Thyroid gland (tissue), 4 donors: ENCODE measurements at regions of chr7 and their contacts with region 1.

Region 1: DNA sequence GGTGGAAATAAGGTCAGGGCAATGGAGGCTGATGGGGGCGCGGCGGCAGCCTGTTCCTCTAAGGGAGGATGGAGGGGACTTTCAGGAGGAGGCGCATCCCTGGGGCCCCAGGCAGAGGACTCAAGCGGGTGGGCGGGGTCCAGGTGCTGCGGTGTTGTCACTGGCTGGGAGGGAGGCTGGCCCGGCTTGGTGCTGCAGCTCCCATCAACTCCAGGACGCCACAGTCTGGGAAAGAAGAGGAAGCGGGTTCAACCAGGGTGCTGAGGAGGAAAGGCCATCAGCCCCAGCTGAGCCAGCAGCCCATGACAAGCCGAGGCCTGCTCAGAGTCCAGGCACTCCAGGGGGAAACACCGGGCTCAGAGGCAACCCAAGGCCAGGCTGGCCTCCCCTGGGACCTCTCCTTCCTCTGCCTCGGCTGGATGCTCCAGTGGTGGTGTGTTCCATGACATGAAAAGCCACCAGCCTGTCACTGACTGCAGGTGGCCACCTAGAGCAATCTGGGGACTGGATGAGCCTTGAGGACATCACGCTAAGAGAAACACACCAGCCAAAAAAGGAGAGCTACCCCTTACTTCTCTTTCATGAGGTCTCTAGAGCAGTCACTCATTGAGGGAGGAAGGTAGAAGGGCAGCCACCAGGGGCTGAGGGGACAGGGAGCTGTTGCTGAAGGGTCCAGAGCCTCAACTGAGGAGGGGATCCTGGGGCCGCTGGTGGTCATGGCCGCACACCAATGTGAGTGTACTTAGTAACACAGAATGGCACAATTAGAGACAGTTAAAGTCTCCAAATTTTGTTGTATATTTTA is 4.5 kb downstream of the GIGYF1 start:
- DNase-seq: no peak
- H3K4me3 ChIP-seq: no peak overlapping the region
- H3K27ac ChIP-seq: no peak overlapping the region
- H3K4me1 ChIP-seq: peaks cover 26 to 41% of the 10 kb centered on the region in 2 donors
- H3K27me3 ChIP-seq: no peaks in the 10 kb centered on the region
- CTCF ChIP-seq: no peak
- POLR2A ChIP-seq: no peak

Region 2: GRCh38 chr7:100568896-100569844 is 120.4 kb before region 1 on chr7:
- intact Hi-C with region 1: loop called (anchors 5 kb)
- DNase-seq: peak; percentile 62 to 72
- H3K4me3 ChIP-seq: peak overlapping the region in 1 of 3 donors; percentile 29
- H3K27ac ChIP-seq: peak overlapping the region in 2 of 3 donors; percentile 0 to 46
- H3K4me1 ChIP-seq: peaks cover 12 to 18% of the 10 kb centered on the region in 2 donors
- H3K27me3 ChIP-seq: no peaks in the 10 kb centered on the region
- CTCF ChIP-seq: peak in 3 of 6 experiments; percentile 20 to 39 (median 35)
- POLR2A ChIP-seq: peak in 1 of 2 donors; percentile 15

Region 3: GRCh38 chr7:100586266-100587025 is 103.1 kb before region 1 on chr7 and contains the start of gene FBXO24:
- intact Hi-C with region 1: no loop called
- DNase-seq: peak; percentile 100
- H3K4me3 ChIP-seq: peak within 1 kb of the TSS; percentile 63 to 96 (median 68)
- H3K27ac ChIP-seq: peak within 1 kb of the TSS; percentile 97 to 98 (median 98)
- H3K4me1 ChIP-seq: peaks cover 36 to 37% of the 10 kb centered on the region in 2 donors
- H3K27me3 ChIP-seq: no peaks in the 10 kb centered on the region
- CTCF ChIP-seq: no peak
- POLR2A ChIP-seq: peak in 1 of 2 donors; percentile 56
- total RNA-seq, gene FBXO24: 0.13 to 0.88 (median 0.50) TPM

Region 4: DNA sequence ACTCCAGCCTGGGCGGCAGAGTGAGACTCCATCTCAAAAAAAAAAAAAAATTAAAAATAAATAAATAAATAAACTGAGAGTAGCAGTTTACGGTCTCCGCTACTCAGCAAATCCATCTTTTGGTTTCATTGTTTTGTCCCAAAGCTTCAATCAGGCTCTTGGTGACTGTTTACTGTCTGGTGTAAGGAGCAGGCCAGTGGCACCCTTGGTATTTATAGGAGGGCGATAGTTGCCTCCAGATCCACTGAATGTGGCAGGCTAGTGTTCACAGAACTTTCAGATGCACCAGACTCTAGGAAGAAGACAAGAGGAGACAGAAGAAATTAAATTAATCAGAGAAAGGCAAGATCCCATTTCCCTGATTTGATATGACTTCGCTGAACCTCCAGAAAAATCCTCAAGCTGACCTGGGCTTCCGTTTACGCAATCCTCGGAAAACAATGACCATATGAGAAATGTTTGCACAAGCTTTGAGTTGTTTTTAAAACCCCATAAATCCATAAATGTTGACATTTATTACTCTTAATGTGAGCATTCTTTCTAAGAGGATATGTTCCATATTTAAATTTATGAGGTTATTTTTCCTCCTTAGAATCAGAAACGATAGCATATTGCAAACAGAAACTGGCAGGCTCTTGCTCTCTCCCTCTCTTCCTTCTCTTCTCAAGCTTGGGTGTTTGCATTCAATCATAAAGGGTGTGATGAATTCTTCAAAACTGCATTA is 252.7 kb after region 1 on chr7:
- intact Hi-C with region 1: no loop called
- DNase-seq: no peak
- H3K4me3 ChIP-seq: no peak overlapping the region
- H3K27ac ChIP-seq: no peak overlapping the region
- H3K4me1 ChIP-seq: no peaks in the 10 kb centered on the region
- H3K27me3 ChIP-seq: no peaks in the 10 kb centered on the region
- CTCF ChIP-seq: no peak
- POLR2A ChIP-seq: no peak